Activated CD4-positive, alpha-beta memory T cell treated with anti-CD3 and anti-CD28 coated beads for 36 hours (primary cell): ENCODE measurements at regions of chr17 and their contacts with region 1.

Region 1: DNA sequence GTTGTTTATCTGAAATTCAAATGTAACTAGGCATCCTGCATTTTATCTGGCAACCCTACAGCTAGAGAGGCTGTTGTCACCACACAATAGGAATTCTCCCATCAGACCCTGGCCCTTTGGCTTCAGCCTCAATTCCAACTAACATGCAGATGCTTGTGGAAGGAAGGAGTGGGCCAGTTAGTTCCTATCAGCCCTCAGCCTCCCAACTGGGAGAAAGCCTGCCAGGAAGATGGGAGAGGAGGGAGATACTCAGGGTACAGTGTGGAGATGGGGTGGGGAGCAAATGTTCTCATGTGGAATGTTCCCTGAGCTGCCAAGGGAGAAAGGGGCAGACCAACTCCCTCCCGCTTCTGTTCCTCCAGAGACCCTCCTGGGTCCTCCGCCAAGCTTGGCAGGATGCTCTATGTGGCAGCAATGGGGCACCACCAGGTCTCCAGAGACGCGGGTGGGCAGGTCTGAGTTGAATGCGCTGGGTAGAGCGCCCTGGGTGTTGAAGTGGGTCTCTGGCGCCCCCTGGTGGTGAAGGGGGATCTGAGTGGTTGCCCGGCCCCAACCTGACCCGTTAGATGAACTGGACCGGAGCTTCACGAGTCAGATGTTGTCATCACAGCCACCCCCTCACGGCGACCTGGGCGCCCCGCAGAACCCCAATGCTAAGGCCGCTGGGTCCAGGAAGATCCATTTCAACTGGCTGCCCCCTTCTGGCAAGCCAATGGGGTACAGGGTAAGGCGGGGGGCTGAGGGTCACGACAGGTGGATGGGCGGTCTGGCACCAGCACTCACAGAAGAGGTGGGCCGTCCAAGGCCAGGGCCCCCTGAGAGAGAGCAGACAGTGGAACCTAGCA is 15.2 kb downstream of the GALK1 start:
- DNase-seq: peak; percentile 91
- H3K4me3 Mint-ChIP-seq: peak overlapping the region; percentile 37
- H3K27ac Mint-ChIP-seq: no peak overlapping the region
- H3K4me1 Mint-ChIP-seq: peaks cover 21% of the 10 kb centered on the region
- H3K27me3 Mint-ChIP-seq: no peaks in the 10 kb centered on the region

Region 2: DNA sequence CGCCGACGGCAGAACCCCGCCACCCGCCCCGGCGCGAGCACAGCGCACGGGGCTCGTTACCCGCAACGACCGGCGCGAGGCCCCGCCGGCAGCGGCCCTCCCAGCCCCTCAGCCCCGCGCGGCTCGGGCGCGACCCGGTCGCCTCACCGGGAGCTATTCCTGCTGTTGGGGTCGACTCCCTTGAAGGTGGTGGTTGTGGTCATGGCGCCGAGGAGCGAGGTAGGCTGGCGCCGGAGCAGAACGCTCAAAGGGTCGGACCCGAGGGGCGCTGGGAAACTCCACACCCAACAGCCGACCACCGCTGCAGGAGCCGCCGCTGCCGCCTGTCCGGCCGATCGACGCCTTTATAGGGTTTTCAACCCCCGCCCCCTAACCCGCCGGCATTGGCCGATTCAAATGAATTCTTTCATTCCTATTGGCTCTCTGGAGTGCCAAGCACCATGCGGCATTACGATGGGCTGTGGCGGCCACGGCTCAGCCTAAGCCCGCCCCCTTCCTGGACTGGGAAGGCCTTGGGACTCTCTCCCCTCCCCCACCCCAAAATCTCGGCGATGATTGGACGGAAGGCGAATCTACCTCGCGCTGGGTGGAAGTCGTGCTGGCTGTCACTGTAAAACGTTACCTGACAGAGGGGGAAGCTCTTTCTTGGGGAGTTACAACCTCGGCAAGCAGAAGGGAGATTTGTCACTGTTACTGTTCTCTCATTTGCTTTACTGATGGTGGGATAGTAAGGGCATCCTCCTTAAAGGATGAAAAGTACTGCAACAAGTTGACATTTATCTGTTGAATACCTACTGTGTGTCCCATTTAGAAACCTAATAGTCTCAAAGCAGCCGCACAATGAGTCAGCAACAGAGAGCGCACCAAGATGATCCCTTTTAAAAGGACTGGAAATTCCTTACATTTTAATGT is 595.3 kb before region 1 on chr17 and contains the start of gene JPT1:
- CTCF ChIA-PET with region 1: no interaction called
- POLR2A ChIA-PET with region 1: no interaction called
- intact Hi-C with region 1: no loop called
- DNase-seq: peak; percentile 99
- H3K4me3 Mint-ChIP-seq: peak within 1 kb of the TSS; percentile 95
- H3K27ac Mint-ChIP-seq: peak within 1 kb of the TSS; percentile 86
- H3K4me1 Mint-ChIP-seq: peaks cover 34% of the 10 kb centered on the region
- H3K27me3 Mint-ChIP-seq: no peaks in the 10 kb centered on the region
- total RNA-seq, gene JPT1: 263 to 267 TPM

Region 3: GRCh38 chr17:75632863-75633485 is 116.8 kb before region 1 on chr17 and contains the start of gene SMIM5:
- CTCF ChIA-PET with region 1: interaction called, 438 read pairs
- POLR2A ChIA-PET with region 1: interaction called, 6 read pairs
- intact Hi-C with region 1: loop called (anchors 1 kb)
- DNase-seq: peak; percentile 87
- H3K4me3 Mint-ChIP-seq: no peak within 1 kb of the TSS
- H3K27ac Mint-ChIP-seq: no peak within 1 kb of the TSS
- H3K4me1 Mint-ChIP-seq: no peaks in the 10 kb centered on the region
- H3K27me3 Mint-ChIP-seq: no peaks in the 10 kb centered on the region
- total RNA-seq, gene SMIM5: not detected

Region 4: DNA sequence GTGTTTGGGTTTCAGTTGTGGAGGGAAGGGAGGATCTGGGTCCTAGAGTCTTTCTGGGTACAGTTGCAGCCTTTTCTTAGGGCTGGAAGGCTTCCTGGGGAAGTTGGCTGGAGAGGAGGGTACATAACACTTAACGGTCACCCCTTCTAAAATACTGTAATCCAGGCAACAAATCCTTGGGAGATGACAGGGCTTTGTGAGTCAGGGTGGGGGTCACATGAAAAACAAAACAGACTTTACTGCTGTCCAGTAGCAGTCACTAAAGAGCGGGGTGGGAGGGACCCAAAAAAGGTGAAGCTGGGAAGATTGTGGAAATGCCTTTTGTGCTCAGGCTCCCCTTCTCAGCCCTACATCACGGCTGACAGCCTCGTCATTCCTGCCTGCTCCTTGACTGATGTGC is 76.3 kb before region 1 on chr17:
- CTCF ChIA-PET with region 1: interaction called, 151 read pairs
- POLR2A ChIA-PET with region 1: interaction called, 3 read pairs
- intact Hi-C with region 1: loop called (anchors 1 kb)
- DNase-seq: no peak
- H3K4me3 Mint-ChIP-seq: no peak overlapping the region
- H3K27ac Mint-ChIP-seq: no peak overlapping the region
- H3K4me1 Mint-ChIP-seq: peaks cover 26% of the 10 kb centered on the region
- H3K27me3 Mint-ChIP-seq: no peaks in the 10 kb centered on the region

Region 5: DNA sequence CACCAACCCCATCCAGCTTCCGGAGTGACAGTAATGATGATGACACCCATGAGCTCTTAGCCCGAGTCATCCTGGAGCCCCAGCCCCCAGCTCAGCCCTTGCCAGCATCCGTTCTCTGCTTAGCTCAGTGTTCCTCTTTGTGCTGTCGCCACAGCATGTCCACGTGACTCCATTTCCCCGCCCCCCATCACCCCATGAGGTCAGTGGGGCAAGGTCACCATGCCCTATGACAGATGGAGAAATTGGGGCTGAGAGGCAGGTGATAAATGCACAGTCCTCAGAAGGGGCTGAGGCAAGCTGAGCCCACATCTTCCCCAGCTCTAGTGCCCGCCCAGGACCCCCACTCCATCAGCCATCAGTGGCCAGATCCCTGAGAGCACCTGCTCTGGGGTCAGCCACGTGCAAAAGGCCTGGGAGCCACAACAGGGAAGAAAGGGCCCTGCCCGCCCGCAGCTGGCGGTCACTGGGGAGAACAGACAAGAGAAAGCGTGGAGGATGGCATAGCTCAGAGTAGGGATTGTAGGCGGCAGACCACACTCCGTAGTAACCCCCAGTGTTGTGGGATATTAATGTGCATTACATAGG is 11.5 kb before region 1 on chr17:
- CTCF ChIA-PET with region 1: interaction called, 38 read pairs
- POLR2A ChIA-PET with region 1: no interaction called
- intact Hi-C with region 1: no loop called
- DNase-seq: peak; percentile 70
- H3K4me3 Mint-ChIP-seq: no peak overlapping the region
- H3K27ac Mint-ChIP-seq: no peak overlapping the region
- H3K4me1 Mint-ChIP-seq: peaks cover 5% of the 10 kb centered on the region
- H3K27me3 Mint-ChIP-seq: no peaks in the 10 kb centered on the region

Region 6: DNA sequence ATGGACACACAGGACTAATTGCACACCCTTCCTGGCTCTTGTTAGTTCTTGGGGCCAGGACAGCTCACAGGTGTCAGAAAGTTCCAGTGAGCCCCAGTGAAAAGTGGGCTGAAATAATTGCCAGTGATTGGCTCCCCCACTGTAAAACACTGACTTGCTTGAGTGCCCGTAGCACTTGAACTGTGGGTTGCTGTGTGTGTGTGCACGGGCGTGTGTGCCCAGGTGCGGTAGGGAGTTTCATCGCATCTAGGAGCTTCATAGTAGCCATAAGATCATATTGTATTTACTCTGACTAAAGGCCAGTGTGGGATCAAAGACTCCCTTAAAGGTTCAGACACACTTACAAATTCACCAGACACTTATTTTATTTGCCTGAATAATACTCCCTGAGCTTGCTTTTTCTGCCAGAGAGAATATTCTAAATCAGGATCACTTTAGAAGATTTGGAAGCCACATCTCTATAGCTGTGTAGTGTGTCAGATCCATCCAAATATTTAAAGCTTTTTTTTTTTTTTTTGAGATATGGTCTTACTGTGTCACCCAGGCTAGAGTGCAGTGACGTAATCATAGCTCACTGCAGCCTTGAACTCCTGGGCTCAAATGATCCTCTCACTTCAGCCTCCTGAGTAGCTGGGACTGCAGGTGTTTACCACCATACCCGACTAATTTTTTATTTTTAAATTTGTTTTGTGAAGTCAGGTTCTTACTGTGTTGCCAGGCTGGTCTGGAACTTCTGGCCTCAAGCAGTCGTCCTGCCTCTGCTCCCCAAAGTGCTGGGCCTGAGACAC is 46.2 kb after region 1 on chr17:
- CTCF ChIA-PET with region 1: interaction called, 10 read pairs
- POLR2A ChIA-PET with region 1: no interaction called
- intact Hi-C with region 1: no loop called
- DNase-seq: no peak
- H3K4me3 Mint-ChIP-seq: no peak overlapping the region
- H3K27ac Mint-ChIP-seq: no peak overlapping the region
- H3K4me1 Mint-ChIP-seq: peaks cover 17% of the 10 kb centered on the region
- H3K27me3 Mint-ChIP-seq: no peaks in the 10 kb centered on the region

Region 7: GRCh38 chr17:75904749-75905521 is 155.2 kb after region 1 on chr17 and contains the start of gene MRPL38:
- CTCF ChIA-PET with region 1: no interaction called
- POLR2A ChIA-PET with region 1: no interaction called
- intact Hi-C with region 1: no loop called
- DNase-seq: peak; percentile 97
- H3K4me3 Mint-ChIP-seq: peak within 1 kb of the TSS; percentile 99
- H3K27ac Mint-ChIP-seq: peak within 1 kb of the TSS; percentile 90
- H3K4me1 Mint-ChIP-seq: peaks cover 17% of the 10 kb centered on the region
- H3K27me3 Mint-ChIP-seq: no peaks in the 10 kb centered on the region
- total RNA-seq, gene MRPL38: 108 TPM

Region 8: GRCh38 chr17:76121932-76122430 is 372.2 kb after region 1 on chr17:
- CTCF ChIA-PET with region 1: no interaction called
- POLR2A ChIA-PET with region 1: no interaction called
- intact Hi-C with region 1: no loop called
- DNase-seq: peak; percentile 35
- H3K4me3 Mint-ChIP-seq: no peak overlapping the region
- H3K27ac Mint-ChIP-seq: no peak overlapping the region
- H3K4me1 Mint-ChIP-seq: peaks cover 9% of the 10 kb centered on the region
- H3K27me3 Mint-ChIP-seq: no peaks in the 10 kb centered on the region

Region 9: GRCh38 chr17:76141212-76142038 is 391.7 kb after region 1 on chr17 and contains the start of gene FOXJ1:
- CTCF ChIA-PET with region 1: no interaction called
- POLR2A ChIA-PET with region 1: no interaction called
- intact Hi-C with region 1: no loop called
- DNase-seq: peak; percentile 95
- H3K4me3 Mint-ChIP-seq: peak within 1 kb of the TSS; percentile 67
- H3K27ac Mint-ChIP-seq: no peak within 1 kb of the TSS
- H3K4me1 Mint-ChIP-seq: peaks cover 55% of the 10 kb centered on the region
- H3K27me3 Mint-ChIP-seq: peaks cover 8% of the 10 kb centered on the region
- total RNA-seq, gene FOXJ1: 0.22 to 0.29 TPM